CD8-positive, alpha-beta memory T cell (primary cell): ENCODE measurements at regions of chr1 and their contacts with region 1.

Region 1: DNA sequence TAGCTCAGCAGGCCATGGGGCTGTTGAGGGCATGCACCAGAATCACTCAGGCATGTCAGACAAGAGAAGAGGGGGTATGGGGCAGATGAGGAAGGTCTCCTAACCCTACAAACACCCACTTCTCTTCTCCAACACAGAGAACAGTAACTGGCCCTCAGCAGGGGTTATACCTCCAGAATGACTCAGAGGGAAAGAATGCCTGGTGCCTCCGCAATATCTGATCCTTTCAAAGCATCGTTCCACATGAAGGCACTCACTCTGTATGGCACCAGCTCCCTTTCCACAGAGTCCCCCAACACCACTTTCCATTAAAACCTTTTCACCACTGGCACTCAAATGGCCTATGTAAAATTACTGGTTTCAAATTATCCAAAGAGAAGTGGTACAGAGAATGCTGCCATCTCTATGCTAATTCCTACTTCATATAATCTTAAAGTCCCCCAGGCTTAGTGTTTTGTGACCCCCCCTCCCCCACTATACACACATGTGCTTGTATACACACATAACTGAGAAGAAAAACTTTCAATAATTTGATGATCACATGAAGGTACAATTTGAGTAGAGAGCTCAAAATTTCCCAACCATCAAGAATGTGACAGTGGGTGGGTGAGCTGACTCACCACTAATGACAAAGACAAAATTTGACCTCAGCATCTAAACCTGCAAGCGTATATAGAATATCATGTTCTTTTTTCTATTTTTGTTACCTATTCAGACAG is 91.5 kb downstream of the SIPA1L2 start:
- DNase-seq: no peak
- H3K4me3 ChIP-seq: no peak overlapping the region
- H3K4me3 Mint-ChIP-seq: no peak overlapping the region
- H3K27ac ChIP-seq: no peak overlapping the region
- H3K27ac Mint-ChIP-seq: peak overlapping the region in 1 of 8 donors; percentile 26
- H3K4me1 ChIP-seq: no peaks in the 10 kb centered on the region
- H3K4me1 Mint-ChIP-seq: peaks cover 0 to 2% (median 0%) of the 10 kb centered on the region in 3 donors
- H3K27me3 ChIP-seq: no peaks in the 10 kb centered on the region
- H3K27me3 Mint-ChIP-seq: peaks cover 0 to 3% of the 10 kb centered on the region in 2 donors

Region 2: GRCh38 chr1:231931846-231932454 is 606.4 kb before region 1 on chr1:
- CTCF ChIA-PET with region 1: no interaction called
- POLR2A ChIA-PET with region 1: no interaction called
- DNase-seq: peak in 2 of 5 donors; percentile 11 to 32
- H3K4me3 ChIP-seq: no peak overlapping the region
- H3K4me3 Mint-ChIP-seq: no peak overlapping the region
- H3K27ac ChIP-seq: no peak overlapping the region
- H3K27ac Mint-ChIP-seq: no peak overlapping the region
- H3K4me1 ChIP-seq: peaks cover 22% of the 10 kb centered on the region
- H3K4me1 Mint-ChIP-seq: peaks cover 16 to 37% (median 27%) of the 10 kb centered on the region in 3 donors
- H3K27me3 ChIP-seq: no peaks in the 10 kb centered on the region
- H3K27me3 Mint-ChIP-seq: peaks cover 0 to 2% of the 10 kb centered on the region in 2 donors

Region 3: GRCh38 chr1:232364654-232365382 is 173.6 kb before region 1 on chr1:
- CTCF ChIA-PET with region 1: no interaction called
- POLR2A ChIA-PET with region 1: interaction called, 16 read pairs
- DNase-seq: no peak
- H3K4me3 ChIP-seq: no peak overlapping the region
- H3K4me3 Mint-ChIP-seq: no peak overlapping the region
- H3K27ac ChIP-seq: no peak overlapping the region
- H3K27ac Mint-ChIP-seq: no peak overlapping the region
- H3K4me1 ChIP-seq: no peaks in the 10 kb centered on the region
- H3K4me1 Mint-ChIP-seq: no peaks in the 10 kb centered on the region
- H3K27me3 ChIP-seq: no peaks in the 10 kb centered on the region
- H3K27me3 Mint-ChIP-seq: peaks cover 1 to 5% of the 10 kb centered on the region in 2 donors

Region 4: DNA sequence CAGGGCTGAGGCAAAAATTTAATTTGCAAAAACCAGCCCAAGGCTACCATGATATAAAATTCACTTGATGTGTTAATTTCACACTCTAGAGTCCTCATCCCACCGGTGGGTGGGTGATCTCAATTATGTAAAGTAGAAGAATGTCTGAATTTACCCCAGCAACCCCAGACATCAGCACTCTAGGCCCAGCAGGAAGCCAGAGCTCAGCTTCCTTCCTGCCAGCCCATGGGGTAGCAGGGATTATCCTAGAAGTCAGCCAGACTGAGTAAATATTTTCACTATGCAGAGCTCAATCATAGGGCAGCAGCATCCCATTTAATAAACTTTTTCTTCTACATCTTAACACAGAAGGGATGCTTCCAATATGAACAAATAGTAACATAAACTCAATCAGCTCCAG is 20.6 kb after region 1 on chr1:
- CTCF ChIA-PET with region 1: no interaction called
- POLR2A ChIA-PET with region 1: no interaction called
- DNase-seq: no peak
- H3K4me3 ChIP-seq: no peak overlapping the region
- H3K4me3 Mint-ChIP-seq: no peak overlapping the region
- H3K27ac ChIP-seq: no peak overlapping the region
- H3K27ac Mint-ChIP-seq: peak overlapping the region in 1 of 8 donors; percentile 39
- H3K4me1 ChIP-seq: no peaks in the 10 kb centered on the region
- H3K4me1 Mint-ChIP-seq: peaks cover 15 to 30% (median 20%) of the 10 kb centered on the region in 3 donors
- H3K27me3 ChIP-seq: no peaks in the 10 kb centered on the region
- H3K27me3 Mint-ChIP-seq: no peaks in the 10 kb centered on the region